Spleen (tissue), 13 donors: ENCODE measurements at regions of chr5 and their contacts with region 1.

Region 1: GRCh38 chr5:14871210-14872069 is at the start of gene ANKH:
- DNase-seq: peak; percentile 95
- H3K4me3 ChIP-seq: peak within 1 kb of the TSS; percentile 55 to 88 (median 66)
- H3K27ac ChIP-seq: peak within 1 kb of the TSS; percentile 74 to 94 (median 86)
- H3K4me1 ChIP-seq: peaks cover 14 to 48% (median 29%) of the 10 kb centered on the region in 6 donors
- H3K27me3 ChIP-seq: peaks cover 0 to 23% (median 0%) of the 10 kb centered on the region in 7 donors
- CTCF ChIP-seq: peak in 1 of 11 experiments; percentile 27
- POLR2A ChIP-seq: no peak
- total RNA-seq, gene ANKH: 33.5 to 87.3 (median 60.3) TPM

Region 2: DNA sequence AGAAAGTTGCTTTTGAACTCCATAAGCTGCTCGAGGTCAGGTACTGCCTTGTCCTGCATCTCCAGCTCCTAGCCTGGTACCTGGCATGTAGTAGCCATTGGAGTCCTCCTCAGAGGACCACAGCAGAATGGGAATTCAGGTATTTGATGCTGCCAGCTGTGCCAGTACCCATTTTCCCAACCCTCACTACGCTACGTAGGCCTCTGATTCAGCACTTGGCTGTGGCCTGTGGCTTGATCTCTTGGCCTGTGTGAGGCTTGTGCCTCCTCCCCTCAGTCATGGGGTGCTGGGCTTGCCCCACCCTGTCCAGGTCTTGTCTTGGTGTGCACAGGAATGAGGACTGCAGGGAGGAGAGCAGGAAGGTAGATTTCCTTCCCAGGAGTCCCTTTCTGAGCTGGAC is 195.1 kb before region 1 on chr5:
- intact Hi-C with region 1: no loop called
- DNase-seq: no peak
- H3K4me3 ChIP-seq: peak overlapping the region in 2 of 8 donors; percentile 4 to 49
- H3K27ac ChIP-seq: peak overlapping the region; percentile 30 to 69 (median 64)
- H3K4me1 ChIP-seq: peaks cover 26 to 75% (median 45%) of the 10 kb centered on the region in 6 donors
- H3K27me3 ChIP-seq: no peaks in the 10 kb centered on the region
- CTCF ChIP-seq: no peak
- POLR2A ChIP-seq: no peak

Region 3: DNA sequence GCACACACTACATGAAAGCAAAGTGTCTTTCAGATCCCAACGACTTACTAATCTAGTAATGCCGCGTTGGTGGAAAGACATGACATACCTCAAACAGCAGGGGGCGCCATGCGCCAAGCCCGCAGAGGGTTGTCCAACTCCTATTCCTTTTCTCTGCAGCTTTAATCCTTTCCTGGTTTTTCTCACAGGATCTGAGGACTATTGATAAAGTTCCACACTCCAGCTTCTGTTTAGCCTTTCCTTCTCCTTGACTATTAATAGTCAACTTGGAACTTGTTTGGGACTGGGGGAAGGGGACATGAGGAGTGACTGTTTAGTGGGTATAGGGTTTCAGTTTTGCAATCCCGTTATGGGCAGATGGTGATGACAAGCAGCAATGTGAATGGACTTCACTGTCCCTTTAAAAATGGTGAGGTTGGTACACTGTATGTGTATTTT is 144.0 kb before region 1 on chr5:
- intact Hi-C with region 1: loop called (anchors 10 kb)
- DNase-seq: peak; percentile 92
- H3K4me3 ChIP-seq: no peak overlapping the region
- H3K27ac ChIP-seq: no peak overlapping the region
- H3K4me1 ChIP-seq: peaks cover 0 to 13% (median 3%) of the 10 kb centered on the region in 6 donors
- H3K27me3 ChIP-seq: no peaks in the 10 kb centered on the region
- CTCF ChIP-seq: peak; percentile 65 to 92 (median 84)
- POLR2A ChIP-seq: peak in 1 of 3 donors; percentile 8